ENCODE measurements at regions of chr21 and their contacts with region 1.

Region 1: DNA sequence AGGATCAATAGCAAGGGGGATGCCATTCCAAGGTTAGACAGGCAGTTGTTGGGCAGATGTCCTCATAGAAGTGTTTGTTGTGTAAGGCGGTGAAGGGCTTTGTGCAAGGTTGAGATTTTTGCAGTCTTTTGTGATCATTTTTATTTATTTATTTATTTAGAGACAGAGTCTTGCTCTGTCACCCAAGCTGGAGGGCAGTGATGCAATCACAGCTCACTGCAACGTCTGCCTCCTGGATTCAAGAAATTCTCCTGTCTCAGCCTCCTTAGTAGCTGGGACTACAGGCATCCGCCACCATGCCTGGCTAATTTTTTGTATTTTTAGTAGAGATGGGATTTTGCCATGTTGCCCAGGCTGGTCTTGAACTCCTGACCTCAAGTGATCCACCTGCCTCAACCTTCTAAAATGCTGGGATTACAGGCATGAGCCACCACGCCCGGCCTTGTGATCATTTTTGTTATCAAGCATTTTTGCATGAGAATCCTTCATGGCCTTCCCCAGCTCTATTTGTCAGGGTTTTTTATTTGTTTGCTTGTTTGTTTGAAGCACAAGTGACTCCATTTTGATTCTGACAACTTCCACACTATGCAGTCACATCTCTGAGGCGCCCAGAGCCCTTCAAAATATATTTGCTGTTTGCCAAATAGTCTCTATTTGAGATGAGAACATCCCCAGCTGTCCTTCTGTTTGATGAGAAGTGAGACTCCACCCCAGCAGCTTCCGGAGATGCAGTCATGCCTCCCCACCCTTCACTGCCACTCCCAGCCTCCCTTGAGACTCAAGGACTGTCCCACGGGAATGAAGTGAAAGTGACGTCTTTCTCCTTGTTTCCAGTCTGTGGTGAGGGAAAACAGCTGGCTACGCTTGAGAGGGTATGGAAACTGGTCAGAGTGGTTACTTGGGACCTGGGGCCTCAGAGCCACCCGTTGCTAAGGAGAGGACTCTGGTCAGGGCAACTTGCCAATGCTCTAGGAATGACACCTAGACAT is 38.0 kb downstream of the TMEM50B start:
- DNase-seq: peak; percentile 85
- H3K4me3 ChIP-seq: peak overlapping the region; percentile 5
- H3K27ac ChIP-seq: peak overlapping the region; percentile 69
- H3K4me1 ChIP-seq: peaks cover 61% of the 10 kb centered on the region
- CTCF ChIP-seq: no peak

Region 2: GRCh38 chr21:32834916-32835235 is 606.9 kb before region 1 on chr21:
- CTCF ChIA-PET with region 1: no interaction called
- POLR2A ChIA-PET with region 1: no interaction called
- intact Hi-C with region 1: loop called (anchors 10 kb)
- DNase-seq: no peak
- H3K4me3 ChIP-seq: no peak overlapping the region
- H3K27ac ChIP-seq: no peak overlapping the region
- H3K4me1 ChIP-seq: no peaks in the 10 kb centered on the region
- CTCF ChIP-seq: no peak

Region 3: GRCh38 chr21:32994305-32994704 is 447.5 kb before region 1 on chr21:
- CTCF ChIA-PET with region 1: no interaction called
- POLR2A ChIA-PET with region 1: no interaction called
- intact Hi-C with region 1: loop called (anchors 10 kb)
- DNase-seq: peak; percentile 18
- H3K4me3 ChIP-seq: no peak overlapping the region
- H3K27ac ChIP-seq: no peak overlapping the region
- H3K4me1 ChIP-seq: no peaks in the 10 kb centered on the region
- CTCF ChIP-seq: peak; percentile 71

Region 4: GRCh38 chr21:33360881-33361602 is 80.7 kb before region 1 on chr21:
- CTCF ChIA-PET with region 1: interaction called, 7 read pairs
- POLR2A ChIA-PET with region 1: interaction called, 8 read pairs
- intact Hi-C with region 1: loop called (anchors 1 kb)
- DNase-seq: peak; percentile 85
- H3K4me3 ChIP-seq: peak overlapping the region; percentile 38
- H3K27ac ChIP-seq: peak overlapping the region; percentile 73
- H3K4me1 ChIP-seq: peaks cover 38% of the 10 kb centered on the region
- CTCF ChIP-seq: peak; percentile 94

Region 5: GRCh38 chr21:33383056-33383888 is 58.5 kb before region 1 on chr21:
- CTCF ChIA-PET with region 1: no interaction called
- POLR2A ChIA-PET with region 1: interaction called, 11 read pairs
- intact Hi-C with region 1: loop called (anchors 1 kb)
- DNase-seq: peak; percentile 96
- H3K4me3 ChIP-seq: peak overlapping the region; percentile 69
- H3K27ac ChIP-seq: peak overlapping the region; percentile 99
- H3K4me1 ChIP-seq: peaks cover 86% of the 10 kb centered on the region
- CTCF ChIP-seq: no peak; the same call in 1 of the 2 replicates